ENCODE measurements at regions of chr12 and their contacts with region 1.

Region 1: GRCh38 chr12:6825398-6826124 is 2.6 kb upstream of the P3H3 start:
- DNase-seq: peak; percentile 81 to 93 (median 90)
- H3K4me3 ChIP-seq: peak overlapping the region in 57 of 59 donors; percentile 3 to 81 (median 67)
- H3K27ac ChIP-seq: peak overlapping the region in 49 of 59 donors; percentile 7 to 98 (median 69)
- H3K27me3 ChIP-seq: peaks cover 0 to 6% (median 0%) of the 10 kb centered on the region in 45 donors
- CTCF ChIP-seq: peak; percentile 72 to 98 (median 91)

Region 2: GRCh38 chr12:6563448-6564050 is 262.0 kb before region 1 on chr12:
- intact Hi-C with region 1: loop called in 1 of 2 experiments (anchors 5 kb)
- DNase-seq: peak in 6 of 10 donors; percentile 37 to 66 (median 56)
- H3K4me3 ChIP-seq: no peak overlapping the region
- H3K27ac ChIP-seq: no peak overlapping the region
- H3K27me3 ChIP-seq: no peaks in the 10 kb centered on the region
- CTCF ChIP-seq: peak; percentile 36 to 82 (median 72)

Region 3: DNA sequence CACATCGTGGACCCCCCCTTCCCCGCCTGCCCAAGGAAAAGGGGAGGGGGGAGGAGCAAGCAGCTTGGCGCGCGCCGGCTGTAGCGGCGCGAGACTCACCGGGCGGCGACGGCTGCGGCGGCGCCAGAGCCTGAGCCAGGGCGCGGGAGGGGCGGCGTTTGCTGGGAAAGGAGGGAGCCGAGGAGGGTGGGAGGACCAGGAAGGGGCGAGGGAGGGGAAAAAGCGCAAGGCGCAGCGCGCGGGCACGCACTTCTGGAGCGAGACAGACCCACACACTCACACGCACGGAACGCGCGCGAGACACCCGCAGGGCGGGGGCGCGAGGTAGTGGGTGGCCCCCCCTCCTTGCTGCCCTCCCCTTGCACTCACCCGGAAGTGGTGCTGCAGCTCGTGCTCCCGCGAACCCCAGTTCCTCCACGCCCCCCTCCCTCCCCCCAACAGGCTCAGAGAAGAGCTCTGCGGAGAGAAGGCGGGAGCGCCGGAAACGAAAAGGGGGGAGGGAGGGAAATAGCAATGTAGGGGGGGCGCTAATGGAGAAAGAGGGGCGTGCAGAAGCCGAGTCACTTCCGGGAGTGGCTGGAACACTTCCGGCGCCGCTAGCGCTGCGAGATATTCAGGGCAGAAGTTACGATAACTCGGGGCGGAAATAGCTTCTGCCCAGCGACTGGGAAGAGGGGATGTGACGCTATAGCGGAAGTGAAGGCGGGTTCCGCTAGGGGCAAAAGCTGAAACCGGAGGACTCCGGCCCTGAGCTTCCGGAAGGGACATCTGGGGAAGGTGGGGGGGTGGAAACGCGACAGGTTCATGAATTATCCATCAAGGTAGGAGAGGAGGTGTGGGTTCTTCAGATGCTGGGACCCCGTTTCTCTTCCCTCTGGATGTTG is 136.3 kb before region 1 on chr12 and contains the start of gene ZNF384:
- intact Hi-C with region 1: no loop called
- DNase-seq: peak; percentile 98 to 100 (median 99)
- H3K4me3 ChIP-seq: peak within 1 kb of the TSS; percentile 64 to 97 (median 88)
- H3K27ac ChIP-seq: peak within 1 kb of the TSS; percentile 74 to 100 (median 98)
- H3K27me3 ChIP-seq: no peaks in the 10 kb centered on the region
- CTCF ChIP-seq: peak in 40 of 56 donors; percentile 7 to 63 (median 36)
- total RNA-seq, gene ZNF384: 37.7 to 73.6 (median 53.6) TPM

Region 4: DNA sequence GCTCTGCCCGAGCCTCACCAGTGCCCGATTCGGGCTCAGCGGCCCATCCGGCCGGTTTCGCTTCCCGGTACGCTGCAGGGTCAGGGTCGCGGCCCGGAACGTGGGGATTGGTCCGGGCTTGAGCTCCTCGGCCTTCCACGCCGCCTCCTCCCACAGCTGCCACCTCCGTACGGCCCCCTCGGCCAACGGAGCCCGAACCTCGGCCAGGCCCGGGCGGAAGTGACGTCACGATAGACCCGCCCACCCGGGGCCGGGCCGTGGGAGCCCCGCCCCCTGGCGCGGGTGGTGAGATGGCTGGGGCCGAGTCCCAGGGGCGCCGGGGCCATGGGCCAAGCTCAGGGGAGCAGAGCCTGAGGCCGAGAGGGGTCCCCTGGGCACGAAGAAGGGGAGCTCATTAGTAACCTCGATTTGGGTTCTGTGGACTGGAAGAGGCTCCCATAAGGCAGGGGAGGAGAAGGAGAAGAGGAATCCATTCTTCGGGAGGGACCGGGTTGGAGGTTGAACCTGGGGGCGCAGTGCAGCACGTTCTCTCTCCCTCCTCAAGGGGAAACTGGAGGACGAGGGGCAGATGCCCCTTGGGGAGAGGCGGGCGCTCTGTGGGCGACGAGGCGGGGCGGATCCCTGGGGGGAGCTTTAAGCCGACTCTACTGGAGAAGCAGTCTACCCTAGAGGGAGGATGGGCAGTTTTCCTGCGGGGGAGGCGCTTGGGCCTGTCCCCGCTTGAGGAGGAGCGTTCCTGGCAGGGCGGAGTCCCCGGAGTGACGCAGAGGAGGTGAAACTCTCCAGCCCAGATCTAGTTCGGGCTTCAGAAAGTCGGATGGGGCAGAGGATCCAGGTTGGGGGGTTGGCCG is 72.4 kb before region 1 on chr12 and contains the start of gene MLF2:
- intact Hi-C with region 1: loop called (anchors 1 kb)
- DNase-seq: peak; percentile 96 to 99 (median 98)
- H3K4me3 ChIP-seq: peak within 1 kb of the TSS; percentile 69 to 100 (median 97)
- H3K27ac ChIP-seq: peak within 1 kb of the TSS; percentile 68 to 100 (median 98)
- H3K27me3 ChIP-seq: no peaks in the 10 kb centered on the region
- CTCF ChIP-seq: peak in 29 of 56 donors; percentile 91 to 98 (median 96)
- total RNA-seq, gene MLF2: 139 to 384 (median 261) TPM

Region 5: DNA sequence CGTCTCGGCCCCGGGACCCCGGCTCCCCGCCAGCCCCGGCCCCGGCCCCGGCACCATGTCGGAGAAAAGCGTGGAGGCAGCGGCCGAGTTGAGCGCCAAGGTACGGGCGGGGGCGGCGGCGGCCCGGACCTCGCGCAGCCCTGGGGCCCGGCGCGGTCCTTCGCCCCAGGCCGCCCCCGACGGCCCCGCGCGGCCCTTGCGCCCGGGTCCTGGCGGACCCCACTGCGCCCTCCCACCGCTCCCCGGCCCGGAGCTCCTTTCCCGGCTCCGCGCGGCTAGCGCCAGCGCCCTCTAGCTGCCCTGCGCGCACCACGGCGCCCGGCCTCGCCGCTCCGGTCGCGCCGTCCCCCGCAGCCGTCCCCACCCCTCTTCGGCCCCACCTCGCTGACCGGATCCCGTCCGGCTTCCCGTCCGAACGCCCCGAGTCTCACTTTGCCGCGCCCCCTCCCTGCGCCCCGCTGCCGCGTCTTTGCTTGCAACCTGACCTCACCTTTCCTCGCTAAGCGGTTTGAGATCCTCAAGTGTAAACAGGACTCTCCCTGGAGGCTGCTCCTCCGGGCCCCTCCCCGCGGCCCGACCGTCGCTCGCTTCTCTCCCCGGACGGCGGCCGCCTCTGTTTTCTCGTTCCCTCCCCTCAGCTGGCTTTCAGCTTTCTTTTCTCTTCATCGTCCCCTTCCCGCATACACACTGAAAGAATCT is 58.8 kb before region 1 on chr12:
- intact Hi-C with region 1: loop called (anchors 5 kb)
- DNase-seq: peak in 7 of 10 donors; percentile 52 to 85 (median 65)
- H3K4me3 ChIP-seq: peak overlapping the region; percentile 35 to 85 (median 70)
- H3K27ac ChIP-seq: peak overlapping the region in 58 of 59 donors; percentile 39 to 99 (median 90)
- H3K27me3 ChIP-seq: no peaks in the 10 kb centered on the region
- CTCF ChIP-seq: peak in 54 of 56 donors; percentile 35 to 85 (median 60)

Region 6: DNA sequence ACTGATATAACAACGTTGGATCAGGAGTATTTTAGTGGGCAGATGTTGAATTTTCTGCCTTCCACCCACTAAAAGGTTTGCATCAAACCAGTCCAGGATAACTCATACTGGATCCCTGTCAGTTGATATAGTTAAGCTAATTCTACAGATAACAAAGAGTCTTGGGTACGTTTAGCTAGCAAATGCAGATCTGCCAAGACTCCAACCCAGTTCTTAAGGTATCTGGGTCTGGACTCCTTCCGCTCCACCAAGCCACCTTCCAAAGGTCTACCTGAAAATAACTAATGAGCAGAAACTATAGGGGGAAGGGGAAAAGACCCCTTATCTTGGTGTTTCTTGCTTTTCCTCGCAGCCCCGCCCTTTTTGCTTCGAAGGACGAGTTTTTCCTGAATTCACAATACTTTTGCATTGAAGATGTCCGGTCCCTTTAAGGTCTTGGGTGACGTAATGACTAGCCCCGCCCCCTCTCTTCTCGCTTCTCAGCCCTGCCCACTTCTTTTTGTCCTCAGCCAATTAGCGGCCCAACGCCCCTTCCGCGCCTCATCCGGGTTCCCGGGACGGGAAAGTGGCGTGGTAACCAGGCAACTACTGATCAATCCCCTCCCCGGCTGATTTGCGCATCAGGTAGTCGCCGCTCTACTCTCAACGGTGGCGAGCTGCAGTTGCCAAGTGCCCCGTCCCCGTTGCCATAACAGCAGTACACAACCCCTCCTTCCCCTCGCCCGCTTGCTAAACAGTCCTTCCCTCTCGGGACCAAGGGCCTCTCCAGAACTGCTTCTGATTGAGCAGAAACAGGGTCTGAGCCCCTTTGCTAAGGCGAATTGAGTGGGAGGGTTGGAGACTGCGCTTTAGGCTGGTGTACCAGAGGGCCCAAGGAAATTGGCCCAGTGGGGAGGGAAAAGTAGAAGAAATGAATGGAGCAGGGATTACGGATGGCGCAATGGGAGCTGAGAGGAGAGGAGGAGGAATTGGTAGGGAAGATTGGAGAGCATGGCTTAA is 79.0 kb after region 1 on chr12 and contains the start of gene LRRC23:
- intact Hi-C with region 1: no loop called
- DNase-seq: peak; percentile 97 to 99 (median 99)
- H3K4me3 ChIP-seq: peak within 1 kb of the TSS; percentile 55 to 99 (median 81)
- H3K27ac ChIP-seq: peak within 1 kb of the TSS; percentile 13 to 95 (median 87)
- H3K27me3 ChIP-seq: no peaks in the 10 kb centered on the region
- CTCF ChIP-seq: peak in 24 of 56 donors; percentile 8 to 54 (median 25)
- total RNA-seq, gene LRRC23: 16.3 to 32.4 (median 22.4) TPM

Region 7: DNA sequence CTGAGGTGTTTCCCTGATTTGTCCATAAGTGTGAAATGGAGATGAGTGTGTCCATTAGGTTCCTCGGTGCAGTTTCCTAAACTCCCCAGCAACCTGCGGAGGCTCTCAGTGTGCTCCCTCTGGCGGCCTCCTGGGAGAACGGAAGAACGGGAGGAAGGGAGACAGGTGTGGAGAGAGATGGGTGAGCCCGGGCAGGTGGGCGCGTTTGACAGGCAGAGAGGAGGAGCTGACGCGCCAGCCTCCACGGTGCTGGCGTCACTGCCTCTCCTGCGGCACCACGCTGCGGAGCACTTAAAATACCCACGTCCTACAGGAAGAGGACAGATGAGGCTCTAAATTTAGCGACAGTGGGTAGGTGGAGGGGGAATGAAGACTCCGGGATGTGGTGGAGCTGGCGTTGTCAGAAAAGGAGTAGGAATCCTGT is 337.1 kb after region 1 on chr12:
- intact Hi-C with region 1: no loop called
- DNase-seq: peak in 8 of 10 donors; percentile 58 to 86 (median 73)
- H3K4me3 ChIP-seq: peak overlapping the region in 14 of 59 donors; percentile 3 to 38 (median 14)
- H3K27ac ChIP-seq: peak overlapping the region in 19 of 59 donors; percentile 9 to 73 (median 38)
- H3K27me3 ChIP-seq: peaks cover 0 to 11% (median 0%) of the 10 kb centered on the region in 45 donors
- CTCF ChIP-seq: peak in 41 of 56 donors; percentile 12 to 52 (median 34)

Measured in dorsolateral prefrontal cortex (tissue), 120 donors.